ENCODE measurements at regions of chrX and their contacts with region 1.

Region 1: DNA sequence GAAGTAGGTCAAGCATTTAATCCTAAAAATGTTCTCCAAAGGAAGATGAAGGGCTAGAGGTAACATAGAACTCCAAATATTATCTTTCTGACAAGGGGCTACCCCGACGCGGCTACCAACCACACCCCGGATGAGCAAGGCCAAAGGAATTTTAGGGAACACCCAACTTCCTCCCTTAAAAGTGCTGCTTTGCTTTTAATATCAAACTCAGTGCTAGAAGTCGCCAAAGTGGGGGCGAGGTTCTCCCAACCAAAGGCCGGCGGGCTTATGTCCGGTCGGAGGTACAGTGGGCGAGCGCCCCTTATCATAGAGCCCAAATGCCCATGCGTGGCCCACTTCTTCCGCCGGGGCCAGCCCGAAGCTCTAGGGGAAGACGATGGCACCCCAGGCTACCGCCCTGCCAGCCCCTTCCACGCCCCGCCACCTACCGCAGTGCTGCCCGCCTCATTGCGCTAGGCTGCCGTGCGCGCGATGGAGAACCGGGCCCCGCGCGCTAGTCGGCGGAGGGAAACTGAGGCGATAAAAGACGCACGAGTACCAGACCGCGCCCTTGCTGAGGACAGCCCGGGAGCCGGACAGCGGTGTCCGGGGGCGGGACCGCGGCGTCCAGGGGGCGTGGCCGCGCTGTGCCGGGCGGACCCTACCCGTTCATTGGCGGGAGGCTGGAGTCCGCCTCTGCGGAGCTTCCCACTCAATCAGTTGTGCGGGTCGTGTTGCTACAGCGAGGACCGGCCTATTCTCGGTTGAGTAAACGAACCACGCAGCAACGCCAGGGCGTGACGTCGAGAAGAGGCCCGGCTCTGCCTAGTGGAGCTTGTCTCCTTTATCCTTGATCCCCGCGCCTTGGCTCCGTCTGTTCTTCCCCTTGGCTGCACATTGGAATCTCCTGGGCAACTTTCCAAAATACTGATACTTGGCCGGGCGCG is at the start of gene ACOT9:
- DNase-seq: peak; percentile 86
- ATAC-seq: peak; percentile 96
- H3K4me3 Mint-ChIP-seq: peak within 1 kb of the TSS; percentile 86
- H3K27ac Mint-ChIP-seq: peak within 1 kb of the TSS; percentile 90
- H3K4me1 Mint-ChIP-seq: peaks cover 18% of the 10 kb centered on the region
- H3K27me3 Mint-ChIP-seq: no peaks in the 10 kb centered on the region
- CTCF ChIP-seq: no peak
- total RNA-seq, gene ACOT9: 28.1 to 28.3 TPM

Region 2: DNA sequence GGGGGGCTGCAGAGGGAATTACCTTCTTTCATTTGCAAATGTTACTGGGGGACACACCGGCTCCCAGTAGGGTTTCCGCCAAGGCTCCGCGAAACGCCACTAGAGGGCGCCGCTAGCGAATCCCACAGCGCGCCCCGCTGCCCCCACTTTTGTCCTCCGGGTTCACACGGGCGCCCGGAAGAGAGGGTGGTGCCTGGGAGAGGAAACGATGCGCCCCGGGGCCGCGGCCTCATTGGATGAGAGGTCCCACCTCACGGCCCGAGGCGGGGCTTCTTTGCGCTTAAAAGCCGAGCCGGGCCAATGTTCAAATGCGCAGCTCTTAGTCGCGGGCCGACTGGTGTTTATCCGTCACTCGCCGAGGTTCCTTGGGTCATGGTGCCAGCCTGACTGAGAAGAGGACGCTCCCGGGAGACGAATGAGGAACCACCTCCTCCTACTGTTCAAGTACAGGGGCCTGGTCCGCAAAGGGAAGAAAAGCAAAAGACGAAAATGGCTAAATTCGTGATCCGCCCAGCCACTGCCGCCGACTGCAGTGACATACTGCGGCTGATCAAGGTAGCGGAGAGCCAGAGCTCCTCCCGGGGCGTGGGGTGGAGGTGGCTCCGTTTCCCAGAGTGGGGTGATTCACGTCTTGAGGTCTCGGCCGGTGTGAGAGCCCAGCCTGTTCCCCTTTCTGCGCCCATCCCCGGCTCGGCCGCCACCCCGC is 40.1 kb after region 1 on chrX and contains the start of gene SAT1:
- CTCF ChIA-PET with region 1: interaction called, 11 read pairs
- POLR2A ChIA-PET with region 1: interaction called, 7 read pairs
- intact Hi-C with region 1: no loop called
- DNase-seq: peak; percentile 96
- ATAC-seq: peak; percentile 87
- H3K4me3 Mint-ChIP-seq: peak within 1 kb of the TSS; percentile 88
- H3K27ac Mint-ChIP-seq: peak within 1 kb of the TSS; percentile 97
- H3K4me1 Mint-ChIP-seq: peaks cover 35% of the 10 kb centered on the region
- H3K27me3 Mint-ChIP-seq: no peaks in the 10 kb centered on the region
- CTCF ChIP-seq: peak; percentile 68
- total RNA-seq, gene SAT1: 94.1 to 101 TPM

Region 3: DNA sequence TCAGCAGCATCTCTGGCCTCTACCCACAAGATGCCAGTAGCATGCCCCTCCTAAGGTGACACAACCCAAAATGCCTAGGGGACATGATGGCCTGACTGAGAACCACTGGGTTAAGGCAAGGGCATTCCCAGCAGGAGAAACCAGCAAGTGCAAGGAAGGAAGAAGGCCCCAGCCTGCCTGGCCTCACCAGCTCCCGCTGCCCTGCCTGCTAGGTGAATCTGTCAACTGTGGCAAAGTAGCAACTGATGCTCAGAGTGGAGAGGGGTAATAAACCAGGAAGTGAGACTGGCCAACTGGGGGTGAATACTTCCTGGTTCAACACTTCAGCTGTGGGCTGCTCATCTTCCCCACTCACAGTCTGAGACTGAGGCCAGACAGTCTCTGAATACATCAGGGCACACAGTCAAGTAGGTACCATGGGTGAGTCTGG is 74.2 kb after region 1 on chrX:
- CTCF ChIA-PET with region 1: no interaction called
- POLR2A ChIA-PET with region 1: no interaction called
- intact Hi-C with region 1: no loop called
- DNase-seq: no peak
- ATAC-seq: peak; percentile 47
- H3K4me3 Mint-ChIP-seq: no peak overlapping the region
- H3K27ac Mint-ChIP-seq: no peak overlapping the region
- H3K4me1 Mint-ChIP-seq: peaks cover 4% of the 10 kb centered on the region
- H3K27me3 Mint-ChIP-seq: no peaks in the 10 kb centered on the region
- CTCF ChIP-seq: no peak